PC-9 (cell line): ENCODE measurements at regions of chr7 and their contacts with region 1.

Region 1: DNA sequence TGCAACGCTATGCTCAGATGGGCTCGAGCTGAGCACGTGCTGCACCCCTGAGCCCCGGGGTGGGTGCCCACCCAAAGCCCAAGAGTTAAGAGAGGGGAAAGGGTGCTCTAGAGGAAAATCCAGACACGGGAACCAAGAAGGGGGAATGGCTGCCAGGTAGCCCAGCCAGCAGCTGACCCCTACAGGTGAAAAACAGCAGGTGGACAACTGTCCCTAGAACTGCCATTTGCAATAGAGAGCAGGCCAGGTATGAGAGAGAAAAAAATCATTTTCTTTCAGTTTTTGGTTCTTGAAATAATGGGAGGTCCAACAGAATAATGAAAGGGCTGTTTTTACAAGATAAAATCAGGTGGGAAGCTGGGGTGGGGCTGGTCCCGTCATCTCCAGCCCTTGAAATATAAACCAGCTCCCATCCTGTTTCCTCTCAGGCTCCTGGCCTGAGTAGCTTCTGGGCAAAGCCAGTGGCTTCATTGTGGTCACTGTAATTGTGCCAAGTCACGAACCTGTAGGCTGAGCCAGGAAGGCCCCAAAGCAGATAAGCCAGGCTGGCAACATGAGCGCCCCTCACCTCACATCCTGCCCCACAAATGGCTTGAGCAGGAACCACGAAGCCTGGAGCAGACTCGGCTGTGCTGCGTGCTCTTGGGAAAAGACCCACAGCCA is 257.8 kb downstream of the SNX10 start:
- DNase-seq: peak; percentile 96 to 100
- H3K4me3 ChIP-seq: peak overlapping the region; percentile 3; the same call in 1 of the 2 replicates
- H3K27ac ChIP-seq: peak overlapping the region; percentile 95
- H3K4me1 ChIP-seq: peaks cover 39% of the 10 kb centered on the region
- H3K27me3 ChIP-seq: no peaks in the 10 kb centered on the region
- CTCF ChIP-seq: peak; percentile 60; the same call in 1 of the 2 replicates

Region 2: GRCh38 chr7:26376175-26376917 is 173.1 kb before region 1 on chr7:
- CTCF ChIA-PET with region 1: no interaction called
- POLR2A ChIA-PET with region 1: no interaction called
- intact Hi-C with region 1: loop called (anchors 1 kb)
- DNase-seq: peak; percentile 62 to 67
- H3K4me3 ChIP-seq: peak overlapping the region; percentile 81
- H3K27ac ChIP-seq: no peak overlapping the region
- H3K4me1 ChIP-seq: peaks cover 8% of the 10 kb centered on the region
- H3K27me3 ChIP-seq: no peaks in the 10 kb centered on the region
- CTCF ChIP-seq: no peak

Region 3: GRCh38 chr7:26398756-26399501 is 150.5 kb before region 1 on chr7:
- CTCF ChIA-PET with region 1: interaction called, 3 read pairs
- POLR2A ChIA-PET with region 1: no interaction called
- intact Hi-C with region 1: loop called (anchors 1 kb)
- DNase-seq: peak; percentile 63 to 83
- H3K4me3 ChIP-seq: peak overlapping the region; percentile 71
- H3K27ac ChIP-seq: peak overlapping the region; percentile 36
- H3K4me1 ChIP-seq: peaks cover 9% of the 10 kb centered on the region
- H3K27me3 ChIP-seq: no peaks in the 10 kb centered on the region
- CTCF ChIP-seq: peak; percentile 54; the same call in 1 of the 2 replicates

Region 4: DNA sequence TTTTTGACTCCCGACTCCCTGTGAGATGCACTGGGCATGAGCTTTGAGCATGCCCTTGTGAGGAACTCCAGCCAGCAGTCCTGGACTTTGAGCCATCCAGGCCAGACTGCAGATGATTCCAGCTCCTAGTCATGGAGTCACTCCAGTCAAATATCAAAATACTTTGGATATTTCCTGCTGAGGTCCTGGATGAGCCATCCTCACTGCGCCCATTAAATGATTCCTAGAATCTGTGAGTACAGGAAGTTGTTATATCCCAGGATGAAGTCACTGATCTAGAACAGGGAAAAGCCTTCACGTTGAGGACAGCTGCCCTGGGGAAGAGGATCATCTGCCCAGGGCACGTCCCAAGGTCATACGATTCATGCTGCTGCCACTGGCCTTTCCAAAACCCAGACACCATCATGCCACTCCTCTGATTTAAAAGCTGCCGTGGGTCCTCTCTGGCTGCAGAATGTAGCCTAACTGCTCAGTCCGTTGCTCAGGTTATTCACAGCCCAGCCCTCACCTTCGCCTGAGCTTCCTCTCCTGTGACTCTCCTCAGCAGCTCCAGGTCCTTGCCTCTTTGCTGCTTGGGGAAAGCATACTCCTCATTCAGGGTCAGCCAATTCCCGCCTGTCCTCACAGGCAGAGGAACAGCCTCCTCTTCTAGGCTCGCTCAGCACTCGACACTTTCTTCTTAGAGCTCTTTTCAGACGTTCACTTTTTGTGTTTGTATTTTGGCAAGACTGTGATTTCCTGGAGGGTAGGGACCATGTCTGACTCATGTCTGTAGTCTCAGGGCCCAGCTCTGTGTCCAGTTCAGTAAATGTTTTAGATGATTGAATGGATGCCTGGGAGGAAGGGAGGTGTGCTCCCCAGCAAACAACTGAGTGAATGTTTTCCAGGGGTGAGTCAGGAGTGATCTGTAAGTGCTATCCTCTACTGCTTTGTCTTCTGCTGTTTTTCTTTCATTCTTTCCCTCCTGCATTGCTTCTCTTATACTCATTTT is 99.9 kb before region 1 on chr7:
- CTCF ChIA-PET with region 1: no interaction called
- POLR2A ChIA-PET with region 1: no interaction called
- intact Hi-C with region 1: loop called (anchors 1 kb)
- DNase-seq: peak; percentile 39 to 63
- H3K4me3 ChIP-seq: no peak overlapping the region
- H3K27ac ChIP-seq: peak overlapping the region; percentile 2; the same call in 1 of the 2 replicates
- H3K4me1 ChIP-seq: peaks cover 34% of the 10 kb centered on the region
- H3K27me3 ChIP-seq: no peaks in the 10 kb centered on the region
- CTCF ChIP-seq: no peak

Region 5: GRCh38 chr7:26515314-26515842 is 34.0 kb before region 1 on chr7:
- CTCF ChIA-PET with region 1: no interaction called
- POLR2A ChIA-PET with region 1: no interaction called
- intact Hi-C with region 1: loop called (anchors 1 kb)
- DNase-seq: peak; percentile 96 to 100
- H3K4me3 ChIP-seq: no peak overlapping the region
- H3K27ac ChIP-seq: peak overlapping the region; percentile 58
- H3K4me1 ChIP-seq: peaks cover 33% of the 10 kb centered on the region
- H3K27me3 ChIP-seq: no peaks in the 10 kb centered on the region
- CTCF ChIP-seq: no peak

Region 6: GRCh38 chr7:26603631-26604030 is 54.2 kb after region 1 on chr7:
- CTCF ChIA-PET with region 1: no interaction called
- POLR2A ChIA-PET with region 1: no interaction called
- intact Hi-C with region 1: loop called (anchors 1 kb)
- DNase-seq: peak; percentile 79 to 99
- H3K4me3 ChIP-seq: no peak overlapping the region
- H3K27ac ChIP-seq: no peak overlapping the region
- H3K4me1 ChIP-seq: peaks cover 24% of the 10 kb centered on the region
- H3K27me3 ChIP-seq: no peaks in the 10 kb centered on the region
- CTCF ChIP-seq: no peak

Region 7: GRCh38 chr7:26805045-26805444 is 255.6 kb after region 1 on chr7:
- CTCF ChIA-PET with region 1: no interaction called
- POLR2A ChIA-PET with region 1: no interaction called
- intact Hi-C with region 1: no loop called
- DNase-seq: no peak
- H3K4me3 ChIP-seq: no peak overlapping the region
- H3K27ac ChIP-seq: no peak overlapping the region
- H3K4me1 ChIP-seq: no peaks in the 10 kb centered on the region
- H3K27me3 ChIP-seq: no peaks in the 10 kb centered on the region
- CTCF ChIP-seq: no peak